ENCODE measurements at regions of chr2 and their contacts with region 1.

Region 1: DNA sequence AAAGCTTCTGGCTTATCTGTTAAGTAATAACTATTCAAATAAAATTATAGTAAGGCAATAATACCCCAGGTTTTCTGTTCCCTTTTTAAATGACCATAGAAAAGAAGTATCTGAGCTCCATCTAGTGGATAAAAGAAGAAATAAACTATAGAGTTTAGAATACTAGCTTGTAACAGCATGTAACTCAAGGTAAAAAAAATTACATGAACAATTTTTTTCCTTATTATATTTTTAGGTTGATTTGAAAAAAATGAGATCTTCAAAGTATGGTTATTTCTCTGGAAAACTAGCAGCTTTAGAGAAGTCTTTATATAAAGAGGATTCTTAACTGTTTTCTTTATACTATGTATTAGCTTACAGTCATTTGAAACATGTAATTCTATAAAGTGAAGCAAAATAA is 58.1 kb downstream of the NCKAP1 start:
- DNase-seq: peak; percentile 41
- CTCF ChIP-seq: no peak

Region 2: GRCh38 chr2:182666674-182667314 is 313.3 kb before region 1 on chr2:
- in situ Hi-C with region 1: loop called (anchors 25 kb)
- DNase-seq: peak; percentile 31
- CTCF ChIP-seq: no peak

Region 3: GRCh38 chr2:182763311-182763912 is 216.7 kb before region 1 on chr2:
- in situ Hi-C with region 1: loop called (anchors 10 kb)
- DNase-seq: no peak
- CTCF ChIP-seq: no peak

Measured in GM13976 (cell line).